ENCODE measurements at regions of chr2 and their contacts with region 1.

Region 1: DNA sequence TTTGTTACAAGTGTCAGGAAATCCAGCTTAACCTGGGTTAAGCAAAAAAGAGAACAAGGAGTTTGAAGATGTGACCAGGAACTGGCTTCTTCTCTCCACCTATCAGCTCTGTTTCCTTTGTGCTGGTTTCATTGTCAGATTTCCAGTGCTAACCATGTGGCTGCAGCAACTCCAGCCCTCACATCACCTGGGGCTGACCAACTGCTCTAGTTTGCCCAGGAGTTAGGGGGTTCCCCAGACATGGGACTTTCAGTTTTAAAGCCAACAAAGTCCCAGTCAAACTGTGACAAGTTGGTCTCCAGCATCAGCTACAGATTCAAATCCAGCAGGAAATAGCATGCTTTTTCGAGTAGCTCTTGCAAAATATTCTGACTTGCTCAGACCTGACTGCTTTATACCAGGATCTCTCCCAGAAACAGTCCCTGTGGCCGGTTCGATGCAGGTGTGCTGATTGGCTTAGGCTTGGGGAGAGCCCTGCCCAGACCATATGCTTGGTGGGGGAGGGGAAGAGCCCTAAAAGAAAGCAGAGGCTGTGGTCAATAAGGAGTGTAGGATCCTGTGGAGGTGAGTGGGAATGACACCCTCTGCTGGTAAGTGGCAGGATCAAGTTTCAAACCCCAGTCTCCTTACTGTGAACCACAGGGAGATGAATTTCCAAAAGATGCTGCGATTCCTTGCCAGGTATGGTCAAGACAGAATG is 49.5 kb downstream of the KCNE4 start:
- DNase-seq: peak; percentile 70 to 73
- H3K4me3 ChIP-seq: no peak overlapping the region
- H3K4me3 Mint-ChIP-seq: no peak overlapping the region
- H3K27ac Mint-ChIP-seq: no peak overlapping the region
- H3K4me1 ChIP-seq: no peaks in the 10 kb centered on the region
- H3K4me1 Mint-ChIP-seq: no peaks in the 10 kb centered on the region
- H3K27me3 ChIP-seq: no peaks in the 10 kb centered on the region
- H3K27me3 Mint-ChIP-seq: peaks cover 7% of the 10 kb centered on the region
- CTCF ChIP-seq: peak; percentile 79 to 90

Region 2: DNA sequence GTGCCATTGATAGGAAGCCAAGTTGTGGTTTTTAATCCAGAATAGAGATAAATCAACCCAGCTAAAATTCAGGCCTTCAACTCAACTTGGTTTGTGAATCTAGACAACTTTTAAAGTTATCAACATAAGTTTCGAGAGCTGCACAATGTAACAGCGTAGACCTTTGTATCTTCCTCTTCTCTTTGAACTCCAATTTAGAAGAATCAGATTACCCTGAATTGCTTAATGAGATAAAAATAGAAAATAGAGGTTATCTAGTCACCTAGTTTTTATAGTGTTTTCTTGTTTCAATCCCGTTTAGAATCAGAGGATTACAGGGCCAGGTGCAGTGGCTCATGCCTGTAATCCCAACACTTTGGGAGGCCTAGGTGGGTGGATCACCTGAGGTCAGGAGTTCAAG is 417.7 kb before region 1 on chr2:
- CTCF ChIA-PET with region 1: no interaction called
- POLR2A ChIA-PET with region 1: no interaction called
- intact Hi-C with region 1: no loop called
- DNase-seq: no peak
- H3K4me3 ChIP-seq: no peak overlapping the region
- H3K4me3 Mint-ChIP-seq: no peak overlapping the region
- H3K27ac Mint-ChIP-seq: no peak overlapping the region
- H3K4me1 ChIP-seq: no peaks in the 10 kb centered on the region
- H3K4me1 Mint-ChIP-seq: no peaks in the 10 kb centered on the region
- H3K27me3 ChIP-seq: no peaks in the 10 kb centered on the region
- H3K27me3 Mint-ChIP-seq: peaks cover 9% of the 10 kb centered on the region
- CTCF ChIP-seq: no peak

Region 3: GRCh38 chr2:222915092-222915957 is 186.2 kb before region 1 on chr2:
- CTCF ChIA-PET with region 1: no interaction called
- POLR2A ChIA-PET with region 1: no interaction called
- intact Hi-C with region 1: loop called (anchors 1 kb)
- DNase-seq: no peak
- H3K4me3 ChIP-seq: no peak overlapping the region
- H3K4me3 Mint-ChIP-seq: no peak overlapping the region
- H3K27ac Mint-ChIP-seq: no peak overlapping the region
- H3K4me1 ChIP-seq: peaks cover 27% of the 10 kb centered on the region
- H3K4me1 Mint-ChIP-seq: peaks cover 7% of the 10 kb centered on the region
- H3K27me3 ChIP-seq: no peaks in the 10 kb centered on the region
- H3K27me3 Mint-ChIP-seq: no peaks in the 10 kb centered on the region
- CTCF ChIP-seq: peak; percentile 40 to 67

Region 4: DNA sequence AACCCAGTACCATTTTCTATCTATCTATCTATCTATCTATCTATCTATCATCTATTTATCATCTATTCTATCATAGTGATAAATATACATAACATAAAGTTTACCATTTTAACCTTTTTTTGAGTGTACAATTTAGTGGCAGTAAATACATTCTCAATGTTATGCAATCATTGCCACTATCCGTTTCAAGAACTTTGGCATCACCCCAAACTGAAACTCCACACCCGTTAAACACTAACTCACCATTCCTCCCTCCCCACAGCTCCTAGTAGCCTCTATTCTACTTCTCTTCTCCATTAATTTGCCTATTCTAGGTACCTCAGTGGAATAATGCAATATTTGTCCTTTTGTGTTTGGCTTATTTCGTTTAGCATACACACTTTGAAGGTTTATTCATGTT is 132.0 kb before region 1 on chr2:
- CTCF ChIA-PET with region 1: interaction called, 34 read pairs
- POLR2A ChIA-PET with region 1: no interaction called
- intact Hi-C with region 1: loop called (anchors 1 kb)
- DNase-seq: no peak
- H3K4me3 ChIP-seq: no peak overlapping the region
- H3K4me3 Mint-ChIP-seq: no peak overlapping the region
- H3K27ac Mint-ChIP-seq: no peak overlapping the region
- H3K4me1 ChIP-seq: no peaks in the 10 kb centered on the region
- H3K4me1 Mint-ChIP-seq: no peaks in the 10 kb centered on the region
- H3K27me3 ChIP-seq: no peaks in the 10 kb centered on the region
- H3K27me3 Mint-ChIP-seq: peaks cover 3% of the 10 kb centered on the region
- CTCF ChIP-seq: no peak

Region 5: DNA sequence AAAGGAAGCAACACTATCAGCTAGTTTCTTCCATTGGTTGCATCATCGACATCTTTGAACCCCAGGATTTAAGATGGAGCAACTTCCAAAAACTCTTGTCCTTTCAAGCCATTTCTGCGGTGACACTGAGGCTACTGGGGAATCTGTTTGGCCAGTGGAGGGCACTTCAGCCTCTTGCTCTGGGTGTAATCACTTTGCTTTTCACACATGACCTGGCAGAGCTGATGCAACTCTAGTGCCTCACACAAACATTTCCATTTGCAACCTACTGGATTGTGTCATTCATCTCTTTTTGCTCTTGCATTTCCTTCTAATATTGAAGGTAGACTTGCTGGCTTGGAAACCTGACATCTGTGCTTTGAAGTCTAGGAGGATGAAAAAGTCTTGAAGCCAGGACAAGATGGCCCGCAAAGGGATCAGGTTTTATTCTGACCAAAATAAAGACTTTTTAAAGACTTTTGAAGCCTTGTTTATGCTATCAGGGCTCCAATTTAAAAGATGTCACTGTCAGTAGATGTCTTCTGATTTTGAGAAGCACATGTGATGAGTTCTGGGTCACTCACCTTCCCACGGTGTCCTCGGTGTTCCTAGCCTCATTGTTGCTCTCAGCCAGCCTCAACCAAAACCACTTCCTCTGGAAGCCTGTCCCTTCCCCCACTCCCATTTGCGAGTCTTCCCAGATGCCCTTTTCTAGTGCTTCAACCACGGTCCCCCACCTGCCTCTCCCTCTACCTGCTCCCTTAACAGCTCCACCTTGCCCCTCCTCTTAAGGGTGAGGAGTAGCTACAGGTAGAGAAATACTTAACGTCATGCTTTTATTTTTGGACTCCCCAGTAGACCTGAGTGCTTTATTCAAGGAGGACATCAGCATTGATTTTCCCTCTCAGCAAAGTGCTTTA is 119.2 kb before region 1 on chr2:
- CTCF ChIA-PET with region 1: interaction called, 6 read pairs
- POLR2A ChIA-PET with region 1: no interaction called
- intact Hi-C with region 1: loop called (anchors 1 kb)
- DNase-seq: peak; percentile 62 to 66
- H3K4me3 ChIP-seq: no peak overlapping the region
- H3K4me3 Mint-ChIP-seq: no peak overlapping the region
- H3K27ac Mint-ChIP-seq: peak overlapping the region; percentile 74
- H3K4me1 ChIP-seq: no peaks in the 10 kb centered on the region
- H3K4me1 Mint-ChIP-seq: peaks cover 7% of the 10 kb centered on the region
- H3K27me3 ChIP-seq: no peaks in the 10 kb centered on the region
- H3K27me3 Mint-ChIP-seq: peaks cover 2% of the 10 kb centered on the region
- CTCF ChIP-seq: peak; percentile 45 to 80

Region 6: GRCh38 chr2:223269386-223269785 is 167.9 kb after region 1 on chr2:
- CTCF ChIA-PET with region 1: no interaction called
- POLR2A ChIA-PET with region 1: no interaction called
- intact Hi-C with region 1: no loop called
- DNase-seq: no peak
- H3K4me3 ChIP-seq: no peak overlapping the region
- H3K4me3 Mint-ChIP-seq: no peak overlapping the region
- H3K27ac Mint-ChIP-seq: no peak overlapping the region
- H3K4me1 ChIP-seq: no peaks in the 10 kb centered on the region
- H3K4me1 Mint-ChIP-seq: no peaks in the 10 kb centered on the region
- H3K27me3 ChIP-seq: no peaks in the 10 kb centered on the region
- H3K27me3 Mint-ChIP-seq: peaks cover 8% of the 10 kb centered on the region
- CTCF ChIP-seq: no peak